Endothelial cell of umbilical vein (primary cell): ENCODE measurements at regions of chr12 and their contacts with region 1.

Region 1: GRCh38 chr12:79874665-79875064 is 60.2 kb downstream of the PPP1R12A start:
- DNase-seq: no peak
- H3K4me3 ChIP-seq: no peak overlapping the region
- H3K27ac ChIP-seq: no peak overlapping the region
- H3K4me1 ChIP-seq: no peaks in the 10 kb centered on the region
- H3K27me3 ChIP-seq: no peaks in the 10 kb centered on the region
- CTCF ChIP-seq: no peak
- POLR2A ChIP-seq: no peak

Region 2: GRCh38 chr12:79886917-79887519 is 12.4 kb after region 1 on chr12:
- CTCF ChIA-PET with region 1: interaction called, 15 read pairs
- POLR2A ChIA-PET with region 1: no interaction called
- dilution Hi-C with region 1: no loop called
- intact Hi-C with region 1: no loop called
- DNase-seq: peak; percentile 77
- H3K4me3 ChIP-seq: no peak overlapping the region
- H3K27ac ChIP-seq: peak overlapping the region; percentile 3
- H3K4me1 ChIP-seq: peaks cover 30% of the 10 kb centered on the region
- H3K27me3 ChIP-seq: no peaks in the 10 kb centered on the region
- CTCF ChIP-seq: peak; percentile 33 to 39
- POLR2A ChIP-seq: no peak